Activated CD8-positive, alpha-beta T cell treated with anti-CD3 and anti-CD28 coated beads, Interleukin-2, amount 10 ng/mL, durations not matched to agents 7 days and 5 days (primary cell): ENCODE measurements at regions of chr7 and their contacts with region 1.

Region 1: GRCh38 chr7:50142425-50143017 is 49.5 kb upstream of the ZPBP start:
- DNase-seq: peak; percentile 71
- ATAC-seq: peak; percentile 72
- H3K4me3 Mint-ChIP-seq: peak overlapping the region; percentile 50
- H3K27ac Mint-ChIP-seq: peak overlapping the region; percentile 50
- H3K4me1 Mint-ChIP-seq: peaks cover 38% of the 10 kb centered on the region
- H3K27me3 Mint-ChIP-seq: peaks cover 6% of the 10 kb centered on the region

Region 2: GRCh38 chr7:50125766-50126165 is 16.8 kb before region 1 on chr7:
- CTCF ChIA-PET with region 1: no interaction called
- POLR2A ChIA-PET with region 1: no interaction called
- DNase-seq: no peak
- ATAC-seq: no peak
- H3K4me3 Mint-ChIP-seq: no peak overlapping the region
- H3K27ac Mint-ChIP-seq: no peak overlapping the region
- H3K4me1 Mint-ChIP-seq: peaks cover 4% of the 10 kb centered on the region
- H3K27me3 Mint-ChIP-seq: peaks cover 5% of the 10 kb centered on the region

Region 3: GRCh38 chr7:50156706-50157105 is 14.2 kb after region 1 on chr7:
- CTCF ChIA-PET with region 1: interaction called, 33 read pairs
- POLR2A ChIA-PET with region 1: interaction called, 10 read pairs
- DNase-seq: no peak
- ATAC-seq: peak; percentile 38
- H3K4me3 Mint-ChIP-seq: peak overlapping the region; percentile 44
- H3K27ac Mint-ChIP-seq: peak overlapping the region; percentile 88
- H3K4me1 Mint-ChIP-seq: peaks cover 50% of the 10 kb centered on the region
- H3K27me3 Mint-ChIP-seq: no peaks in the 10 kb centered on the region

Region 4: DNA sequence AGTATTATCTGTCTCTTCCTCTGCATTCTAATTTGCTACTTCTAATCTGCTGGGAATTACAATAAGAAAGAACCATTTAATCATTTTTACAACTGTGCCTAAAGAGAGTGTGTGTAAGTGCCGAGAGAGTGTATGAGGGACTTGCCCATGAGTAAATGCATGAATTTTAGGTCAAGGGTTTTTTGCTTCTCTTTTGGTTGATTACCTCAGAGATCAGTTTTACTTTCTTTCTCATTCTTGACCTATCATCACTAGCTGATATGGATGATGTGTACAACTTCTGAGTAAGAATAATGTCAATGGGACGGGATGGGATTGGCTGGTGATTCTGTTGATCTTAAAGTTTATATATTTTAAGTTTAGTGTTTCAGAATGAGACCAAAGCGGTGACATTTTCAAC is 209.8 kb after region 1 on chr7:
- CTCF ChIA-PET with region 1: no interaction called
- POLR2A ChIA-PET with region 1: no interaction called
- DNase-seq: no peak
- ATAC-seq: peak; percentile 60
- H3K4me3 Mint-ChIP-seq: peak overlapping the region; percentile 64
- H3K27ac Mint-ChIP-seq: peak overlapping the region; percentile 89
- H3K4me1 Mint-ChIP-seq: peaks cover 95% of the 10 kb centered on the region
- H3K27me3 Mint-ChIP-seq: no peaks in the 10 kb centered on the region